Caco-2 (cell line): ENCODE measurements at regions of chr2 and their contacts with region 1.

Region 1: GRCh38 chr2:96407041-96407918 is 71.7 kb downstream of the NCAPH start:
- DNase-seq: peak; percentile 64 to 71
- H3K4me3 ChIP-seq: no peak overlapping the region
- H3K4me3 Mint-ChIP-seq: no peak overlapping the region
- H3K27ac Mint-ChIP-seq: no peak overlapping the region
- H3K4me1 ChIP-seq: peaks cover 28% of the 10 kb centered on the region
- H3K4me1 Mint-ChIP-seq: peaks cover 20% of the 10 kb centered on the region
- H3K27me3 ChIP-seq: no peaks in the 10 kb centered on the region
- H3K27me3 Mint-ChIP-seq: no peaks in the 10 kb centered on the region
- CTCF ChIP-seq: peak; percentile 89 to 90

Region 2: DNA sequence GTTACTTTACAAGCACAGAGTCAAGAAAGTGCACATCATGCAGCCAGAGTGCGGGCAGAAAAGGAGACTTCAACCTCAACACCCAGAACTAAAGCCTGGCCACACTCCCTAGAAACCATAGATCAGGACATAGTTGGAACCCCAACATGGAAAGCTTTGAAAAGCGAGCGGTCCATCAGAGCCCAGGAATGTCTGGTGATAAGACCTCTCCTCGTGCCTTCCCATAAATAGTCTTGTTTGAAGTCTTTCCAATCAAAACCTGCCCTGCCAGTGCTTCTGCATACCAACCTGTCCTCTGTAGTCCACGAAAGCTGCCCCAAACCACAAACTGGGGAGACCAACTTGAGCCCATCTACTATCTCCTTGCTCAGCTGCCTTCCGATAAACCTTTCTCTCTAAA is 42.4 kb after region 1 on chr2:
- CTCF ChIA-PET with region 1: no interaction called
- POLR2A ChIA-PET with region 1: no interaction called
- intact Hi-C with region 1: loop called (anchors 1 kb)
- DNase-seq: peak; percentile 70 to 79
- H3K4me3 ChIP-seq: no peak overlapping the region
- H3K4me3 Mint-ChIP-seq: peak overlapping the region; percentile 20
- H3K27ac Mint-ChIP-seq: peak overlapping the region; percentile 79
- H3K4me1 ChIP-seq: peaks cover 26% of the 10 kb centered on the region
- H3K4me1 Mint-ChIP-seq: peaks cover 20% of the 10 kb centered on the region
- H3K27me3 ChIP-seq: no peaks in the 10 kb centered on the region
- H3K27me3 Mint-ChIP-seq: no peaks in the 10 kb centered on the region
- CTCF ChIP-seq: no peak